AG04450 (cell line): ENCODE measurements at regions of chrX and their contacts with region 1.

Region 1: DNA sequence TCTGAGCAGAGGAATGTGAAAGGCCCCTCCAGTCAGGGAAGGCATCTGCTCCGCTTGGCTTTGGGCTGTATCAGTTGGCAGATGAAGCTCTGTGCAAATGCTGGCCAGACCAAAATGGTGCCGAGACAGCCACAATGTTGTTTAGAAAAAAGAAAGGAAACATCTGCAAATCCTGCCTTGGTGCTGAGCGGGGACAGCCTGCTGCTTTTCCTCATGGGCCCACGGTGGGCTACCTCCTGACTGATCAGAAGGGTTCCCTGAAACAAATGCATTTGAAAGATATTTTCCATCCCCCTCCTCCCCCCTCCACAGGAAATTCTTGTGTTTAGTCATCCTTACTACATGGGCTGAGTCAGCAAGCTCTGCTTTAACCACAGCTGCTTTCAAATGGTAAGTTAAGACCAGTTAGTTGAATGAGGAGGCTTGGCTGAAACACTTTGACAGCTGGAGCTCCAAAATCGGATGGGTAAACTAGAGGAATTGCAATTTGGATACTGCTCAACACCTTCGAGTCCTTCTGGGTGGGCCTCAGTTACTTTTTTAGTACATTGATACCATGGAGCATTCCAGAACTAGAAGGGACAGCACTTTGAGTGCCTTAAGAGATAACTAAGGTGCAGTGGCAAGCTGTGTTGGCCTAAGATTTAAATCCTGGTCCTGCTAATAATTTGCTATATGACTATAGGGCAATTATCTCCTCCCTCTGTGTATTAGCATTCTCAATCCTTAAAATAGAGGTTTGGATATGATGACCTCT is 36.0 kb downstream of the PLAC1 start:
- DNase-seq: no peak
- H3K4me3 ChIP-seq: no peak overlapping the region
- H3K27ac ChIP-seq: peak overlapping the region; percentile 87
- H3K27me3 ChIP-seq: no peaks in the 10 kb centered on the region
- CTCF ChIP-seq: no peak

Region 2: DNA sequence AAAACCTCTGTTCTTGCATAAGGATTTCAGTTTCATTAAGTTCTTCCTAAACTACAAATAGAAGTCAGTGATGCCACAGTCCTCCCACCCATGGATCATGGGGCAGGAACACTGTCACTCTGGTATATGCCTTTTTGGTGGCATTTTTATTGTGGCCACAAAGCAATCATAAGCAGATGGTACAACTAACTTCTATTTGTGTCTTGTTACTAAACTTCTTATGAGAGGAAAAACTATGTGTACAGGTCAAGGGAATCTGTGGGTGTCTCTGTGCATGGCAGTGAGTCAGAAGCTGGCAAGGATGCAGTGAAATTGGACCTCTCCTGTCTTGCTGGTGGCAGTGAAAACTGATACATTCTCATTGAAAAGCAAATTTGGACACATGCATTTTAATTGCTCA is 962.0 kb before region 1 on chrX:
- CTCF ChIA-PET with region 1: no interaction called
- POLR2A ChIA-PET with region 1: no interaction called
- DNase-seq: no peak
- H3K4me3 ChIP-seq: no peak overlapping the region
- H3K27ac ChIP-seq: no peak overlapping the region
- H3K27me3 ChIP-seq: no peaks in the 10 kb centered on the region
- CTCF ChIP-seq: no peak

Region 3: DNA sequence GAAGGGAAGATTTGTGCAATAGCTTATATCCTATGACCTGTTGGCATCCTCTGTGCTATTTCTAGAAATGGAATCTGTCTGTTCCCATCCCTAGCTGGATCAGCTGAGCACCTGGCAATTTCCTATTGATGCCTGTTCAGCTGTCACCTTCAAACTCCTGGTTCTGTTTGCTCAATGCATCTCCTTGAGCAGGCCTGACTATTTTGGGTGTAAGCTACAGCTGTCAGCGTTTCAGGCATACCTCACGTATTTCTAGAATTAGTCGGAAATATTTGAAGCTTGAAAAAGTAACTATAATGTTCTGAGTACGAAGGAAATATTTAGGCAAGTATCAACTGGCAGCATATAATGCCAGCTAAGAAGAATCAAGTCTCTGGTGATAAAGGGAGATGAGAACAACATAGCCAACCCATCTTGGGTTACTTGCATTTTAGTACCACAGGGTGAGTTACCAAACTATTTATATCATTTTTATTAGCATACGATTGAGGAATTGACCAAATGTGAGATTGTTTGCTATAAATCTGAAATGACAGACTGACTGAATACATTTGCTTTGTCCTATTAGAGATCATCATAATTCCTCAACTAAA is 72.2 kb after region 1 on chrX:
- CTCF ChIA-PET with region 1: interaction called, 10 read pairs
- POLR2A ChIA-PET with region 1: no interaction called
- DNase-seq: no peak
- H3K4me3 ChIP-seq: no peak overlapping the region
- H3K27ac ChIP-seq: no peak overlapping the region
- H3K27me3 ChIP-seq: no peaks in the 10 kb centered on the region
- CTCF ChIP-seq: no peak